Sigmoid colon (tissue), 7 donors: ENCODE measurements at regions of chr5 and their contacts with region 1.

Region 1: GRCh38 chr5:96807075-96807654 is 580 bp downstream of the ERAP1 start:
- DNase-seq: peak; percentile 89
- H3K4me3 ChIP-seq: peak overlapping the region; percentile 69 to 99 (median 92)
- H3K27ac ChIP-seq: peak overlapping the region; percentile 93 to 100 (median 98)
- H3K4me1 ChIP-seq: peaks cover 0 to 30% (median 19%) of the 10 kb centered on the region in 4 donors
- H3K27me3 ChIP-seq: no peaks in the 10 kb centered on the region
- CTCF ChIP-seq: no peak
- EP300 ChIP-seq: no peak
- POLR2A ChIP-seq: no peak

Region 2: GRCh38 chr5:96781031-96781937 is 25.9 kb before region 1 on chr5:
- intact Hi-C with region 1: loop called (anchors 2 kb)
- DNase-seq: no peak
- H3K4me3 ChIP-seq: no peak overlapping the region
- H3K27ac ChIP-seq: peak overlapping the region; percentile 48 to 72 (median 70)
- H3K4me1 ChIP-seq: peaks cover 0 to 55% (median 46%) of the 10 kb centered on the region in 4 donors
- H3K27me3 ChIP-seq: no peaks in the 10 kb centered on the region
- CTCF ChIP-seq: no peak
- EP300 ChIP-seq: no peak
- POLR2A ChIP-seq: no peak

Region 3: GRCh38 chr5:96876292-96876850 is 69.2 kb after region 1 on chr5 and contains the start of gene ERAP2:
- intact Hi-C with region 1: loop called (anchors 2 kb)
- DNase-seq: no peak
- H3K4me3 ChIP-seq: peak within 1 kb of the TSS; percentile 59 to 66 (median 62)
- H3K27ac ChIP-seq: peak within 1 kb of the TSS; percentile 70 to 78 (median 74)
- H3K4me1 ChIP-seq: peaks cover 0 to 15% (median 3%) of the 10 kb centered on the region in 4 donors
- H3K27me3 ChIP-seq: no peaks in the 10 kb centered on the region
- CTCF ChIP-seq: no peak
- EP300 ChIP-seq: no peak
- POLR2A ChIP-seq: no peak
- total RNA-seq, gene ERAP2: 7.7 to 10.7 (median 8.2) TPM